Common myeloid progenitor, CD34-positive (primary cell): ENCODE measurements at regions of chr20 and their contacts with region 1.

Region 1: GRCh38 chr20:19995220-19995863 is 21.8 kb upstream of the NAA20 start:
- DNase-seq: peak; percentile 59 to 78 (median 74)
- H3K4me3 ChIP-seq: no peak overlapping the region
- H3K27ac ChIP-seq: no peak overlapping the region
- H3K4me1 ChIP-seq: peaks cover 1 to 16% (median 7%) of the 10 kb centered on the region in 4 experiments
- H3K27me3 ChIP-seq: no peaks in the 10 kb centered on the region

Region 2: DNA sequence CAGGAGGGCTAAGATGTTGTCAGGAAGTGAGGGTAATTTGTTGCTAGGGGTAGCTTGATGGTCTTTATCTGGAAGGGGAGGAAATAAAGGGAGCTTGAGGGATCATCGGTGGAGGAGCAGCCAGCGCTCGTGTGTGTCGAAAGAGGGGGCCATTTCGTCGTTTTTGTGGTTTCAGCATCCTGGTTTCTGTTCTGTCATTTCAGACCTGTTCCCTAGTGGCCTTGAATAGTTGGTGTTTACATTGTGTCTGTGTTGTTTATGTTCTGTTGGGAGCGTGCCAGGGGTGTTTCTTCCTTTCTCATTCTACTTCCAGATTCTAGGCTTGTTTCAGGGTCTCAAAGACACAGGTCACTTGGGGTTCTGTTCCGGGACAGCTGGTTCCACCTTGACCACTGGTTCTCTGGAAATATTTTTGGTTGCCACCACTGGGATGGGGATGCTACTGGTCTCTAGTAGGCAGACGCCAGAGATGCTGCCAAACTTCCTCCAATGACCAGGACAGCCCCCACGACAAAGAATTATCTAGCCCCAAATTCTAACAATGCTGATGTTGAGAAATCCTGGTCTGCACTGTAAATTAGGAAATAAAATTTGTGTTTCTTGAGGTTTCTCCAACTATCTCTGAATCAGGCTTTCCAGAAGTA is 92.1 kb before region 1 on chr20:
- CTCF ChIA-PET with region 1: interaction called, 51 read pairs
- POLR2A ChIA-PET with region 1: no interaction called
- DNase-seq: peak; percentile 85 to 91 (median 90)
- H3K4me3 ChIP-seq: no peak overlapping the region
- H3K27ac ChIP-seq: no peak overlapping the region
- H3K4me1 ChIP-seq: peaks cover 0 to 6% (median 5%) of the 10 kb centered on the region in 4 experiments
- H3K27me3 ChIP-seq: no peaks in the 10 kb centered on the region

Region 3: GRCh38 chr20:19909725-19910124 is 85.6 kb before region 1 on chr20:
- CTCF ChIA-PET with region 1: interaction called, 51 read pairs
- POLR2A ChIA-PET with region 1: no interaction called
- DNase-seq: peak in 2 of 3 donors; percentile 28 to 41
- H3K4me3 ChIP-seq: no peak overlapping the region
- H3K27ac ChIP-seq: no peak overlapping the region
- H3K4me1 ChIP-seq: peaks cover 1 to 18% (median 9%) of the 10 kb centered on the region in 4 experiments
- H3K27me3 ChIP-seq: no peaks in the 10 kb centered on the region

Region 4: GRCh38 chr20:20096421-20096820 is 101.1 kb after region 1 on chr20:
- CTCF ChIA-PET with region 1: no interaction called
- POLR2A ChIA-PET with region 1: no interaction called
- DNase-seq: no peak
- H3K4me3 ChIP-seq: no peak overlapping the region
- H3K27ac ChIP-seq: no peak overlapping the region
- H3K4me1 ChIP-seq: no peaks in the 10 kb centered on the region
- H3K27me3 ChIP-seq: peaks cover 0 to 3% (median 0%) of the 10 kb centered on the region in 5 experiments